ENCODE measurements at regions of chr2 and their contacts with region 1.

Region 1: GRCh38 chr2:71068218-71069035 is at the start of gene NAGK:
- DNase-seq: peak; percentile 74
- H3K4me3 ChIP-seq: peak within 1 kb of the TSS; percentile 99
- CTCF ChIP-seq: peak; percentile 8

Region 2: GRCh38 chr2:70984576-70985282 is 83.7 kb before region 1 on chr2:
- CTCF ChIA-PET with region 1: interaction called, 15 read pairs
- POLR2A ChIA-PET with region 1: no interaction called
- DNase-seq: no peak
- H3K4me3 ChIP-seq: no peak overlapping the region
- CTCF ChIP-seq: peak; percentile 90

Region 3: GRCh38 chr2:71130113-71130904 is 61.9 kb after region 1 on chr2 and contains the starts of genes MCEE and MPHOSPH10:
- CTCF ChIA-PET with region 1: interaction called, 3 read pairs
- POLR2A ChIA-PET with region 1: interaction called, 28 read pairs
- DNase-seq: peak; percentile 37
- H3K4me3 ChIP-seq: peak within 1 kb of the TSS; percentile 98
- CTCF ChIP-seq: no peak

Measured in AG04449 (cell line).